A673 (cell line): ENCODE measurements at regions of chr3 and their contacts with region 1.

Region 1: DNA sequence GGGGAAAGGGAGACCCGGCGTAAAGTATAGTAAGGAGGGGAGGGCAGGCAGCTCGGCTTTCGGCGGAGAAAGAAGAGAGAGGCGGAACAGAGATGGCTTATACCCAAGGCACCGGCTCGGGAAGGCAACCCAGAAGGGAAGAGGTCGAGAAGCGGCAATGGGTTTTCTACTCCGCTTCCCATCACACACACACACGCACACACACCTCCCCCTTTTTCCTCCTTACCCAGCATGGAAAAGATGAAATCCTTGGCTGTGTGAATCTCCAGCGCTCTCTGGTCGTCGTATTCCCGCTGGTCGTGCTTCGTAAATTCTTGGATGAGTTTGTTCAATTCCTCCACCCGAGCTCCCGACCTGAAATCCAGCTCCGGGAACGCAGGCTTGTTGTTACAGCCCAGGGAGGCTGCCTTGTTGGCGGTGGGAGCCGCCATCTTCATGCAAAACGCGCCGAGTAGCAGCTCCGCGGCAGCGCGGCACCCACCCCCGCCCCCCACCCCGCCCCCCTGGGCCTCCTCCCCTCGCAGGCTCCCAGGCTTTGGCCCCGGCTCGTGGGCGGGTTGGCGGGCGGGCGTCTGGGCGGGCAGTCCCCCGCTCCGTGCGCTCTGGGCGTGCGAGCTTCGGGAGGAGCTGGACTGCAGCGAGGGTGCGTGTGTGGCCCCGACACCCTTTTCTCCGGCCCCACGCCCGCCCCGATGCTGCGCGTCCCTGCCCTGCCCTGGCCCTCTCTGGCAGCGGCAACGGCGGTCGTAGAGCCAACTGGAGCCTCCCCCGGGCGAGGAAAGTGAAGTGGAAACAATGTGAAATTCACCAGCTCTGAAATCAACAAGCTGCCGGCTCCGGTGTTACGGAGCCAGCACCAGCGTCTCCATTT is at the start of gene MB21D2:
- DNase-seq: peak; percentile 91
- H3K4me3 ChIP-seq: peak within 1 kb of the TSS; percentile 61
- H3K27ac ChIP-seq: peak within 1 kb of the TSS; percentile 86
- H3K4me1 ChIP-seq: peaks cover 26% of the 10 kb centered on the region
- H3K27me3 ChIP-seq: no peaks in the 10 kb centered on the region
- CTCF ChIP-seq: 0 out of 2 replicates have a peak, but pooled peaks have one; percentile 13
- total RNA-seq, gene MB21D2: 6.1 and 8.1 TPM in 2 replicates

Region 2: DNA sequence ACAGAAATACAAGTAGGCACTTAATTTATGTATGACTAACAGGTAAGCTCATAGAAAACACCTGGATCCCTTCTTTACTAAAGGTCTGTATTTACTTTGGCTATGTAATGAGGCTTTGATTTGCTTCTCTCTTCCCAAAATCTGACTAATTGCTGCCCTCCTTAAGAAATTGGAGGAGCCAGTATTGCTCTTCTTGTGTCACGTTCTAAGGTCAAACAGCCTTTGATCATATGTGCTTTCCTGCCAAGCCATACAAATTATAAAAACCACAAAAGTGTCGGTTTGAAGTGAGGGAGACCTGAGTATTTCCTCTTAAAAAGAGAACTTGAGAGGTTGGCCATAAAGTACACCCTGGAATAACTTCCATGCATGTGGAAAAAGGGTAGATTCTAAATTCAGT is 112.2 kb after region 1 on chr3:
- CTCF ChIA-PET with region 1: no interaction called
- POLR2A ChIA-PET with region 1: no interaction called
- intact Hi-C with region 1: no loop called
- DNase-seq: no peak
- H3K4me3 ChIP-seq: no peak overlapping the region
- H3K27ac ChIP-seq: no peak overlapping the region
- H3K4me1 ChIP-seq: no peaks in the 10 kb centered on the region
- H3K27me3 ChIP-seq: no peaks in the 10 kb centered on the region
- CTCF ChIP-seq: no peak

Region 3: DNA sequence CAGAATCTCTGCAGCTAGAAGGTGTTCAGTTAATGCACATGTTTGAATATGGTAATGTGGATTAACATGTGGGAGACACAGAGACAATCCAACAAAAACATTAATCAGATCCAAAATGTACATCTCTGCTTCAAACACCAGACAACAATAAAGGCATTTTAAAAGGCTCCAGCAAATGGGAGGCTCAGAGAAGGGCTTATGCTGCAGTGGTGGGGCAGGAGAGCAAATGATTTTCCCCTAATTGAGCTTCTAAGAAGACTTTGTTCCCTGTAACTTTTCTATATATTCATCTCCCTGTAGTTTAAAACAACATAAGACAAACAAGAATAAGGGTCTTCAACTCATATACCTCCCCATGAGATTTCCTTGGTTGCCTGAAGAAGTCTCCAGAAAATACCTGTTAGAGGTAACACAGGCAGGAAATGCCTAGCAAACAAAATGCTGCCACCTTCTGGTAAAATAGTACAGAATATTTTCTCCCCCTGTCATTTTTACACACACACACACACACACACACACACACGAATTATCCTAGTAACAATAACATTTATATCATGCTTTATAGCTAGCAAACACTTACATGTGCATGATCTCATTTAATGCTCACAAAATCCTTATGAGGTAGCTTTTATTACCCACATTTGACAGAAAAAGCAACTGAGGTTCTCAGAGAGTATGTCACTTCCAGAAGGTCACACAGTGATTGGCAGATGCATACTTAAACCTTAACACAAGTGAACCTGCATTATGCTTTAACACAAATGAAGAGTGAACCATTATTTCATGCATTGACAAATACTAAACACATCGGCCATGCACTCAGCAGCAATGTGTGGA is 123.4 kb after region 1 on chr3:
- CTCF ChIA-PET with region 1: interaction called, 5 read pairs
- POLR2A ChIA-PET with region 1: no interaction called
- intact Hi-C with region 1: loop called (anchors 5 kb)
- DNase-seq: peak; percentile 54
- H3K4me3 ChIP-seq: no peak overlapping the region
- H3K27ac ChIP-seq: no peak overlapping the region
- H3K4me1 ChIP-seq: no peaks in the 10 kb centered on the region
- H3K27me3 ChIP-seq: no peaks in the 10 kb centered on the region
- CTCF ChIP-seq: peak; percentile 67